Right ventricle myocardium inferior (tissue), 1 donor: ENCODE measurements at regions of chr1 and their contacts with region 1.

Region 1: DNA sequence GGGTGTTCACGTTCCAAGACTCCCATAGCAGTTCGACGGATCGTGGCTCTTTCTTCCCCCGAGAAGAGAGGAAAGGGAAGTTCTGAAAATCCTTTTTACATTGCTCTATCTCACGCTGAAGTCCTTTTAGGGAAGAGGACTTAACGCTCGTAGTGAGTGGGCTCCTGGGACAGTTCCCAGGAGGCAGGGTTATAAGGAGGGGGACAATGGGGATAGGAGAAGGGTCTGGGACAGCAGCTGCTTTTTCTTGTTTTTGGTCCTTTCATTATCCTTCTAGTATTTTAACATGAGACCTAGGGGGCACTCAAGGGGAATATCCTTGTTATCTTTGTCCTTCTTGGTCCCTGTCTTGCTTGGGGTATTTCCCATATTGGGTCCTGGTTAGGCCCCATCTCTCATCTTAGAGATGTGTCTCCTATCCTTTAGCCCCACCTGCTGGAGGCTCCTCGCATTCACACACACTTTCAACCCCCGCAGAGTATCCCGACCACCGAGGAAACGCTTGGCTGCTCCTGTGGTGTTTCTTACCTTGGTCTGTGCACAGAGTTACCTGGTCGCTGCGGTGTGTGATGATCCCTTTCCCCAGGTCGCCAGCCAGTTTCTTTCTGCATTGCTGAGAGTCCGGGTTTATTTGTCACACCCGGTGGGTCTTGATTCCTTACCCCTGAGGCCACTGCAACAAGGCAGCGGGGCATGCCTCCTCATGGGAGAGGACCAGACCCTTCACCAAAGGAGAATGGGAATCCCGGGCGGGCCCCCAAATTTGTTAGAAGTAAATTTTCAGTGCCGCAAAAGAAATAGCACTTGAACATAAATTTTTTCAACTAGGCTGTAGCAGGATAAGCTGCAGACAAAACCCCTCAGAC is 29.7 kb downstream of the SCCPDH start:
- DNase-seq: peak; percentile 75
- ATAC-seq: peak; percentile 84

Region 2: DNA sequence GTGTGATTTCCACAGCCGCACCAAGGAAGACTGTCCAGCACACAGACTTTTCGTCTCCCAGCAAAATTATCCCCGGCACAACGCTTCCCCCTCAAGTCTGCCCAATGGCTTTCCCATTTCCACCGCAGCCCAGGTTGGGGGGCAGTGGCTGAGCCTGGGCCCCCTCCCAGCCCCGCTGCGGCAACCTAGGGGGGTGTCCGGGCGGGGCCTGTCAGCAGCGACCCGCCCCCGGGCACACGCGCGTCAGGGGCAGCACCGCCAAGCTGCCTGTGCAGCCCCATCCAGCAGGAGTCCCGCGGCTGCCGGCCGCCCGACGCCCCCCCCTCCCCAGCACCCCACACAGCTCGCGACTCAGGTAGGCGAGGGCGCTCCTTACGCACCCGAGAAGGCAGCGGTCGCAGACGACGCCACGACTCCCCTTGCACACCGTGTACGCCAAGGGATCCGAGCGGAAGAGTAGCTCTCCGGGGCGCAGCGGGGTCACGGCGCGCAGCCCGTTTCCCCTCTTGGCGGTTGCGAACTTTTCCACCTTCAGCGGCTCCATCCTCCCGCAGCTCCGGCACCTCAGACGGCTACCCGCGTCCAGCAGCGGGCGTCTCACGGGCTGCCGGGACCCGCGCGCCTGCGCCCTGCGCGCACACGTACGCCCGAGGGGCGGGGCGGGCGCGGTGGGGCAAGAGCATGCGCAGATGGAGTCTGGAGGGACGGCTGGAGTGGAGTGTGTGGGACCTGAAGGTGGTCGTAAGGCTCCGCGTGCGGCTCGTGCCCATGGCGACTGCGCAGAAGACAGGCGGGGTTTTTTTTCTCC is 247.0 kb before region 1 on chr1 and contains the start of gene SMYD3:
- intact Hi-C with region 1: loop called (anchors 5 kb)
- DNase-seq: peak; percentile 91
- ATAC-seq: peak; percentile 99
- total RNA-seq, gene SMYD3: 8.8 TPM